CD4-positive, alpha-beta T cell (primary cell): ENCODE measurements at regions of chr17 and their contacts with region 1.

Region 1: GRCh38 chr17:56913864-56914640 is at the start of gene TRIM25:
- DNase-seq: peak; percentile 77 to 94 (median 88)
- ATAC-seq: peak; percentile 90
- H3K4me3 ChIP-seq: peak within 1 kb of the TSS; percentile 89
- H3K4me3 Mint-ChIP-seq: peak within 1 kb of the TSS; percentile 90
- H3K27ac ChIP-seq: peak within 1 kb of the TSS; percentile 63 to 70
- H3K27ac Mint-ChIP-seq: peak within 1 kb of the TSS; percentile 85
- H3K4me1 ChIP-seq: peaks cover 53% of the 10 kb centered on the region
- H3K4me1 Mint-ChIP-seq: peaks cover 38% of the 10 kb centered on the region
- H3K27me3 ChIP-seq: no peaks in the 10 kb centered on the region
- H3K27me3 Mint-ChIP-seq: no peaks in the 10 kb centered on the region
- CTCF ChIP-seq: no peak
- total RNA-seq, gene TRIM25: 31.7 to 33.2 TPM

Region 2: GRCh38 chr17:56833809-56834379 is 80.2 kb before region 1 on chr17 and contains the starts of genes C17orf67 and DGKE:
- CTCF ChIA-PET with region 1: interaction called, 3 read pairs
- POLR2A ChIA-PET with region 1: interaction called, 42 read pairs
- intact Hi-C with region 1: loop called in 1 of 2 experiments (anchors 1 kb)
- DNase-seq: peak; percentile 97 to 100 (median 99)
- ATAC-seq: peak; percentile 87
- H3K4me3 ChIP-seq: peak within 1 kb of the TSS; percentile 96
- H3K4me3 Mint-ChIP-seq: peak within 1 kb of the TSS; percentile 99
- H3K27ac ChIP-seq: peak within 1 kb of the TSS; percentile 58 to 83
- H3K27ac Mint-ChIP-seq: peak within 1 kb of the TSS; percentile 95
- H3K4me1 ChIP-seq: peaks cover 41% of the 10 kb centered on the region
- H3K4me1 Mint-ChIP-seq: peaks cover 67% of the 10 kb centered on the region
- H3K27me3 ChIP-seq: no peaks in the 10 kb centered on the region
- H3K27me3 Mint-ChIP-seq: no peaks in the 10 kb centered on the region
- CTCF ChIP-seq: no peak
- total RNA-seq, gene C17orf67: 4.3 to 4.8 TPM
- total RNA-seq, gene DGKE: 20.0 to 22.3 TPM

Region 3: GRCh38 chr17:56851008-56851407 is 63.0 kb before region 1 on chr17:
- CTCF ChIA-PET with region 1: no interaction called
- POLR2A ChIA-PET with region 1: no interaction called
- intact Hi-C with region 1: no loop called
- DNase-seq: no peak
- ATAC-seq: no peak
- H3K4me3 ChIP-seq: no peak overlapping the region
- H3K4me3 Mint-ChIP-seq: no peak overlapping the region
- H3K27ac ChIP-seq: no peak overlapping the region
- H3K27ac Mint-ChIP-seq: no peak overlapping the region
- H3K4me1 ChIP-seq: no peaks in the 10 kb centered on the region
- H3K4me1 Mint-ChIP-seq: peaks cover 14% of the 10 kb centered on the region
- H3K27me3 ChIP-seq: no peaks in the 10 kb centered on the region
- H3K27me3 Mint-ChIP-seq: no peaks in the 10 kb centered on the region
- CTCF ChIP-seq: no peak

Region 4: DNA sequence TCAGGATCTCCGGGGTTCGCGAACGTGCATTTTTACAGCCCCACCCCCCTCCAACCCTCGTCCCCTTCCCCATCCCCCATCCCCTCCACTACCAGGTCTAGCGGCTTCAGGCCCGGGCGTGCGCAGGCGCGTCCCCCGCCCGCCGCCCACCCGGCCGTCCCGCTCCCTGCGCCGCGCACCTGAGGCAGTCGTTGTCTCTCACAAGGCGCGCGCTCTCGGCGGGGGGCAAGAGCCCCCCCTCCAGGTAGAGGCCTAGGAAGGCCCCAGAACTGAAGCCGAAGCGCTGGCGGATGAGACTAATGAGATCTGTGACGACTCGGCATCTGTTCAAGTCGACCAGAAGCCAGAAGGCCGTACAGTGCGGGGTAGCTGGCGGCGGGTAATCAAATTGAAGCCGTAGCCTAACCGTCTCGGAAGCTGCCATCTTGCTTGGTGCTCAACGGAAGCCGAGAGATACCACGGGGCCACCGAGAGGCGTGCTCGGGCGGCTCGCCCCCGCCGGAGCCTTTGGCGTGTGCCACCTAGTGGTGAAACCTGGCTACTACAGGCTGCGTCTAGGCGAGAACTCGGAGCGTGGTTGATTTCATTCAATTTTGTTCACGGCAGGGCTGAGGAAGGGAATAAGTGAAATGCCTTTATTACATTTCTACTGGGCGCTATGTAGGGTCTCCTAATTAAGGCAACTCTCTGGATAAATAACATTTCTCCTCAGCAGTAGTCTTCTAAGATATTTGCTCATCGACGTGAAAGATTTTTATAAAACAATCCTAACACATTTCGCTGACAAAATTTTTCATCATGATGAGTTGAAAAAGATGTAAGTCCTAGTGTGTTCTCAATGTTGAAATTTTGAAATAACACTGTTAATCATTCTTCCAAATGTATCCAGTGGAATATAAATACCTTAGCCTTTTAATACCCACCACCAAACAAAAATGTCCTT is 46.8 kb after region 1 on chr17 and contains the start of gene COIL:
- CTCF ChIA-PET with region 1: no interaction called
- POLR2A ChIA-PET with region 1: interaction called, 12 read pairs
- intact Hi-C with region 1: loop called in 1 of 2 experiments (anchors 5 kb)
- DNase-seq: peak; percentile 89 to 96 (median 92)
- ATAC-seq: peak; percentile 97
- H3K4me3 ChIP-seq: peak within 1 kb of the TSS; percentile 68
- H3K4me3 Mint-ChIP-seq: peak within 1 kb of the TSS; percentile 93
- H3K27ac ChIP-seq: peak within 1 kb of the TSS; percentile 82 to 83
- H3K27ac Mint-ChIP-seq: peak within 1 kb of the TSS; percentile 78
- H3K4me1 ChIP-seq: peaks cover 26% of the 10 kb centered on the region
- H3K4me1 Mint-ChIP-seq: peaks cover 27% of the 10 kb centered on the region
- H3K27me3 ChIP-seq: peaks cover 0 to 2% of the 10 kb centered on the region in 2 experiments
- H3K27me3 Mint-ChIP-seq: no peaks in the 10 kb centered on the region
- CTCF ChIP-seq: peak; percentile 96
- total RNA-seq, gene COIL: 19.4 to 20.3 TPM

Region 5: DNA sequence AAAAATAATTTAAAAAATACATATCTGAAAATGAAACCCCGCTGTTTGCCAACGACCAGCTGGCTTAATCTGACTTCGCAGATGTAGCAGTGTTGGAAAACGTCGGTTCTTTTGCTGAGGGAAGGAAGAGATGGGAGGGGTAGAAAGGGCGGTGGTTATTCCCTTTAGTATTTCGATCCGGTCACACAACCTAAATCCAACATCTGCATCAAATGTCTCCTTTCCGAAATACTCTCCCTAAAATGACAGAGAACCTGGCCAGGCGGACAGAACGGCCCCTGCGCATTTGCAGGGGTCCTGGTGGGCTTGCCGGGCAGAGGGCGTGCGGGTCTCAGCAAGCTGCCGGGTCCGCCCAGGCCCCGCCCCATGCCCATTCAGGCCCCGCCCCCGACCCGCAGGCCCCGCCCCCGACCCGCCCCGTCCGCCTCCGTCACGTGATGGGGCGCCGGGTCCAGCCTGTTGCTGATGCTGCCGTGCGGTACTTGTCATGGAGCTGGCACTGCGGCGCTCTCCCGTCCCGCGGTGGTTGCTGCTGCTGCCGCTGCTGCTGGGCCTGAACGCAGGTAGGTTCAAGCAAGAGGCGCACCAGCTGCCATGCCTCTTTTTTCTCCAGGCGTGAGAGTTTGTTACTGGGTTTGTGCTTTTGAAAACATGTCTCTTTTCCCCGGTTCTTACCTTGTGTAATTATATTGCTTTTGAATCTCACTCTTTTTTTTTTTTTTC is 63.8 kb after region 1 on chr17 and contains the start of gene SCPEP1:
- CTCF ChIA-PET with region 1: no interaction called
- POLR2A ChIA-PET with region 1: interaction called, 8 read pairs
- intact Hi-C with region 1: loop called in 1 of 2 experiments (anchors 2 kb)
- DNase-seq: peak; percentile 63 to 92 (median 80)
- ATAC-seq: peak; percentile 96
- H3K4me3 ChIP-seq: peak within 1 kb of the TSS; percentile 72
- H3K4me3 Mint-ChIP-seq: peak within 1 kb of the TSS; percentile 92
- H3K27ac ChIP-seq: no peak within 1 kb of the TSS
- H3K27ac Mint-ChIP-seq: peak within 1 kb of the TSS; percentile 73
- H3K4me1 ChIP-seq: peaks cover 17% of the 10 kb centered on the region
- H3K4me1 Mint-ChIP-seq: peaks cover 13% of the 10 kb centered on the region
- H3K27me3 ChIP-seq: no peaks in the 10 kb centered on the region
- H3K27me3 Mint-ChIP-seq: peaks cover 8% of the 10 kb centered on the region
- CTCF ChIP-seq: no peak
- total RNA-seq, gene SCPEP1: 22.1 to 25.5 TPM